Caco-2 (cell line): ENCODE measurements at regions of chr9 and their contacts with region 1.

Region 1: DNA sequence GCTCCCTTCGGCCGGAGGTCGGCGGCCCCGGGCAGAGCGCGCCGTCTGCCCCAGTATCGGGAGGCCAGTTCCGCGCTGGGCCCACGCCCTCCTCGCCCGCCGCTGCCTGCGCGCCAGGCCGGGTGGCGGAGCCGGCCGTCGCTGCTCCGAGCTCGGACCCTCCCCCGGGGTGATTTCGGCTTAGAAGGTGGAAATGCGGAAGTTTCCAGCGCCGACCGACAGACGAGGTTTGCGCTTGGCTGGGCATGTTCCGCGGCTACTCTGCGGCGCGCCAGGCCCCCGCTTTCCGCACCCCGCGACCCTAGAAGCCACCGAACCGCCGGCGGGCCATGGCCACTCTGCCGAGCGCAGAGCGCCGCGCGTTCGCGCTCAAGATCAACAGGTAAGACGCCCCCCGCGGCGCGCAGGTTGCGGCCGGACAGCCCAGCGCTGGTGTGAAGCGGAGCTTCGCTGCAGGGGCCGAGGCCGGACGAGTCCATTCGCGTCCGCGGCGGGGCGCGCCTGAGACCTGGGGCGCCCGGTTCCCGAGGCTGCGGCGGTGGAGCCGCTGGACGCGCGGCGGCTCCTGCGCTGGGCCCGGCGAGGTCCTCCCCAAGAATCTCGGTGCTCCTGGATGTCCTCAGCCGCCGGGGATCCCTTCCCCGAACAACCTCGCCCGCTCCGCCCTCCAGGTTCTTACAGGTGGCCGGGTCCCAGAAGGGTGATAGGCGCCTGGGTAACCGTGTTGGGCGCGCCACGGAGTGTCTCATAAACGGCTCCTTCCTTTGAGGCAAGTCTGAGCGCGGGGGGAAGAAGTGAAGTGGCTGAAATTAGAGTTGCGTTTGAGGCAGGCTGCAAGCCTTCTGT is at the start of gene DOCK8:
- DNase-seq: peak; percentile 80 to 89
- H3K4me3 ChIP-seq: peak within 1 kb of the TSS; percentile 66
- H3K4me3 Mint-ChIP-seq: peak within 1 kb of the TSS; percentile 77
- H3K27ac Mint-ChIP-seq: peak within 1 kb of the TSS; percentile 61
- H3K4me1 ChIP-seq: peaks cover 25% of the 10 kb centered on the region
- H3K4me1 Mint-ChIP-seq: peaks cover 13% of the 10 kb centered on the region
- H3K27me3 ChIP-seq: no peaks in the 10 kb centered on the region
- H3K27me3 Mint-ChIP-seq: no peaks in the 10 kb centered on the region
- CTCF ChIP-seq: peak; percentile 25 to 39
- total RNA-seq, gene DOCK8: 15.2 and 15.6 TPM in 2 replicates

Region 2: GRCh38 chr9:242461-243080 is 27.7 kb after region 1 on chr9:
- CTCF ChIA-PET with region 1: no interaction called
- POLR2A ChIA-PET with region 1: no interaction called
- intact Hi-C with region 1: no loop called
- DNase-seq: no peak
- H3K4me3 ChIP-seq: no peak overlapping the region
- H3K4me3 Mint-ChIP-seq: no peak overlapping the region
- H3K27ac Mint-ChIP-seq: no peak overlapping the region
- H3K4me1 ChIP-seq: no peaks in the 10 kb centered on the region
- H3K4me1 Mint-ChIP-seq: no peaks in the 10 kb centered on the region
- H3K27me3 ChIP-seq: no peaks in the 10 kb centered on the region
- H3K27me3 Mint-ChIP-seq: no peaks in the 10 kb centered on the region
- CTCF ChIP-seq: no peak

Region 3: DNA sequence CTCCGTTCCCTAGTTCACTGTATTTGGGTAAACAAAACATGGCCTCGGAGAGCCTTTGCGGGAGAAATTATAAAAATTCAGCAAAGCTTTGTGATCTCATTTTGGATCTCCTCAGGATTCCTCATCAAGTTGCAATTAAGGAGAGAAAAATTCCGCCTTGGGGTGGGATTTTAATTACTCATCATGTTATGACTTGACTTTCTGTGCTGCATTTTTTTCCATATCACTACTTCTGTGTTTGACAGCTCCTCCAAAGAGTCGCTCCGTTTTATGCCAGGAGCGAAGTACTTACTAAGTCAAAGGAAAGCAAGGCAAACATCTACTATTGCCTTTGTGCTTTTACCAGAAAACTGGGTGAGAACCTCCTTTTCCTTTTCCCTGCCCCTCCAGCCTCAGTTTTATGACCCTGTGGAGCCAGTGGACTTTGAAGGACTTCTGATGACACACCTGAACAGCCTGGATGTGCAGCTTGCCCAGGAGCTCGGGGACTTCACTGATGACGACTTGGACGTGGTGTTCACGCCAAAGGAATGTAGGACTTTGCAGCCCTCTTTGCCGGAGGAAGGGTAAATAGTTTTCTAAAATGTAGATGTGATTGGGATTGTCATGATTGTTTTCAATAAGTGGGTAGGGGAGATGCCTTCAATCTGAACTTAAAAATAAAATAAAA is 71.3 kb after region 1 on chr9:
- CTCF ChIA-PET with region 1: interaction called, 3 read pairs
- POLR2A ChIA-PET with region 1: no interaction called
- intact Hi-C with region 1: loop called (anchors 5 kb)
- DNase-seq: peak; percentile 5 to 50
- H3K4me3 ChIP-seq: no peak overlapping the region
- H3K4me3 Mint-ChIP-seq: no peak overlapping the region
- H3K27ac Mint-ChIP-seq: peak overlapping the region; percentile 69
- H3K4me1 ChIP-seq: peaks cover 17% of the 10 kb centered on the region
- H3K4me1 Mint-ChIP-seq: peaks cover 18% of the 10 kb centered on the region
- H3K27me3 ChIP-seq: no peaks in the 10 kb centered on the region
- H3K27me3 Mint-ChIP-seq: no peaks in the 10 kb centered on the region
- CTCF ChIP-seq: no peak

Region 4: DNA sequence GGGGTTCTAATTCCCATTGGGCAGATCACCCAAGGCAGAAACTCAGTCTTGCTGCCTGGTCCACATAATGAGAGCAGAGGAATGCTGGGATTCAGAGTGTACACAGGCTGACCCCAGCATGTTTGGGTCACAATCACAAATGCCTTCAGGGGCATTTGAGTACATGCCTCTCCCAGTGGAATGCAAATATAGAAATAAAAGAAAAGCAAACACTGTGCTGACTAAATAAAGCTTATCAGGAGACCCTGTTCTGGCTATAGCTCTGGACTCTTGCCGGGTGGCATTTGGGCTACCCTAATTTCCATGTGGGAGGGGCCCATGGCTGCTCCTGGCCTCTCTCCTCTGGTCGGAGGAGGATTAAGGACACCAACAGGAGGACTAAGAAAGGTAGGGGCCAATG is 121.2 kb after region 1 on chr9:
- CTCF ChIA-PET with region 1: interaction called, 4 read pairs
- POLR2A ChIA-PET with region 1: interaction called, 4 read pairs
- intact Hi-C with region 1: loop called (anchors 1 kb)
- DNase-seq: peak; percentile 83
- H3K4me3 ChIP-seq: no peak overlapping the region
- H3K4me3 Mint-ChIP-seq: peak overlapping the region; percentile 46
- H3K27ac Mint-ChIP-seq: peak overlapping the region; percentile 88
- H3K4me1 ChIP-seq: peaks cover 27% of the 10 kb centered on the region
- H3K4me1 Mint-ChIP-seq: peaks cover 19% of the 10 kb centered on the region
- H3K27me3 ChIP-seq: no peaks in the 10 kb centered on the region
- H3K27me3 Mint-ChIP-seq: no peaks in the 10 kb centered on the region
- CTCF ChIP-seq: no peak

Region 5: GRCh38 chr9:459491-460444 is 244.9 kb after region 1 on chr9:
- CTCF ChIA-PET with region 1: no interaction called
- POLR2A ChIA-PET with region 1: no interaction called
- intact Hi-C with region 1: no loop called
- DNase-seq: no peak
- H3K4me3 ChIP-seq: no peak overlapping the region
- H3K4me3 Mint-ChIP-seq: no peak overlapping the region
- H3K27ac Mint-ChIP-seq: no peak overlapping the region
- H3K4me1 ChIP-seq: no peaks in the 10 kb centered on the region
- H3K4me1 Mint-ChIP-seq: peaks cover 13% of the 10 kb centered on the region
- H3K27me3 ChIP-seq: no peaks in the 10 kb centered on the region
- H3K27me3 Mint-ChIP-seq: no peaks in the 10 kb centered on the region
- CTCF ChIP-seq: no peak